Pancreas (tissue), 10 donors: ENCODE measurements at regions of chr22 and their contacts with region 1.

Region 1: DNA sequence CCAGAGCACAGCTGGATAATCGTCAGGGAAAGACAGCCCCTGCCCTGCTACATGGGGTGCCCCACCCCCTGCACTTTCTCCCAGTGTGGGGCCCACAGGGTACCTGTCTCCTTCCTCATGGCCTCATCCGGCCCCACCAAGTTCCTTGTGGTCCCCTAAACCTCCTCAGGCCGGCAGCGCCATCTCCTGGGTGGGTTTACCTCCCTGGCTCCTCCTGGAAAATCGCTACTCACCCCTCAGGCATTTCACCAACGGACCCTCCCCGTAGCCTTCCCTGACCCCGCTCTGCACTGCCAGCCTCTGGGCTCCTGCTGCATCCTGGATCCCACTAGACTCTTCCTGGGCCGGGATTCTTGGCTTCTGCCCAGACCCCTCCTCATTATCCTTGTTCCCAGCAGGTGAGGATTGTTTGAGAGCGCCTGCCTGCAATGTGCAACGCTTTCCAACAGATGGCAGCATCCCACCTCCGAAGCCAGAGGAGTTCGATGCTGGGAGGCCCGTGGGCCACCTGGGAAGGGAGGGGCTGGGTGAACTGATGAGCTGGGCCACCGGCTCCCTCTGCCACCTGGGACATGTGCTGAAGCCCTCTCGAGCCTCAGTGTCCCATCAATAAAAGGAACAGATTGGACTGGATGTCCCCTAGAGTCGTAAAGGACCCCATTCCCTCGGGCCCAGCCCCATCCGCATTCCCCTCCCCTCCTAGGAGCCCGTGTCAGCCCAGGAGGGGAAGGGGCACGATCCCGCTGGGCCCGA is 44.2 kb upstream of the TTLL12 start:
- DNase-seq: peak; percentile 23 to 87 (median 73)
- ATAC-seq: peak; percentile 56 to 84 (median 79)
- H3K4me3 ChIP-seq: no peak overlapping the region
- H3K27ac ChIP-seq: no peak overlapping the region
- H3K4me1 ChIP-seq: peaks cover 0 to 5% (median 3%) of the 10 kb centered on the region in 3 donors
- H3K27me3 ChIP-seq: no peaks in the 10 kb centered on the region
- CTCF ChIP-seq: peak; percentile 70 to 88 (median 85)

Region 2: GRCh38 chr22:43346521-43346929 is 115.4 kb after region 1 on chr22:
- intact Hi-C with region 1: loop called in 1 of 3 experiments (anchors 5 kb)
- DNase-seq: peak; percentile 23 to 79 (median 48)
- ATAC-seq: peak in 3 of 4 donors; percentile 66 to 76 (median 73)
- H3K4me3 ChIP-seq: no peak overlapping the region
- H3K27ac ChIP-seq: no peak overlapping the region
- H3K4me1 ChIP-seq: peaks cover 0 to 4% (median 0%) of the 10 kb centered on the region in 3 donors
- H3K27me3 ChIP-seq: peaks cover 0 to 7% (median 3%) of the 10 kb centered on the region in 4 donors
- CTCF ChIP-seq: peak; percentile 31 to 56 (median 44)

Region 3: GRCh38 chr22:43385770-43386641 is 154.9 kb after region 1 on chr22:
- intact Hi-C with region 1: loop called in 2 of 3 experiments (anchors 5 to 10 kb)
- DNase-seq: peak; percentile 63 to 94 (median 82)
- ATAC-seq: peak; percentile 92 to 97 (median 96)
- H3K4me3 ChIP-seq: no peak overlapping the region
- H3K27ac ChIP-seq: no peak overlapping the region
- H3K4me1 ChIP-seq: no peaks in the 10 kb centered on the region
- H3K27me3 ChIP-seq: peaks cover 0 to 4% (median 0%) of the 10 kb centered on the region in 4 donors
- CTCF ChIP-seq: peak; percentile 73 to 92 (median 84)